CD4-positive, alpha-beta memory T cell (primary cell): ENCODE measurements at regions of chr7 and their contacts with region 1.

Region 1: GRCh38 chr7:135509903-135510602 is at the start of gene CNOT4:
- DNase-seq: peak; percentile 91 to 98 (median 95)
- H3K4me3 ChIP-seq: peak within 1 kb of the TSS; percentile 73 to 85
- H3K4me3 Mint-ChIP-seq: no peak within 1 kb of the TSS
- H3K27ac ChIP-seq: peak within 1 kb of the TSS; percentile 95
- H3K27ac Mint-ChIP-seq: no peak within 1 kb of the TSS
- H3K4me1 ChIP-seq: peaks cover 34% of the 10 kb centered on the region
- H3K4me1 Mint-ChIP-seq: peaks cover 2 to 12% (median 6%) of the 10 kb centered on the region in 4 donors
- H3K27me3 ChIP-seq: no peaks in the 10 kb centered on the region
- H3K27me3 Mint-ChIP-seq: no peaks in the 10 kb centered on the region
- total RNA-seq, gene CNOT4: 33.9 to 35.0 TPM

Region 2: DNA sequence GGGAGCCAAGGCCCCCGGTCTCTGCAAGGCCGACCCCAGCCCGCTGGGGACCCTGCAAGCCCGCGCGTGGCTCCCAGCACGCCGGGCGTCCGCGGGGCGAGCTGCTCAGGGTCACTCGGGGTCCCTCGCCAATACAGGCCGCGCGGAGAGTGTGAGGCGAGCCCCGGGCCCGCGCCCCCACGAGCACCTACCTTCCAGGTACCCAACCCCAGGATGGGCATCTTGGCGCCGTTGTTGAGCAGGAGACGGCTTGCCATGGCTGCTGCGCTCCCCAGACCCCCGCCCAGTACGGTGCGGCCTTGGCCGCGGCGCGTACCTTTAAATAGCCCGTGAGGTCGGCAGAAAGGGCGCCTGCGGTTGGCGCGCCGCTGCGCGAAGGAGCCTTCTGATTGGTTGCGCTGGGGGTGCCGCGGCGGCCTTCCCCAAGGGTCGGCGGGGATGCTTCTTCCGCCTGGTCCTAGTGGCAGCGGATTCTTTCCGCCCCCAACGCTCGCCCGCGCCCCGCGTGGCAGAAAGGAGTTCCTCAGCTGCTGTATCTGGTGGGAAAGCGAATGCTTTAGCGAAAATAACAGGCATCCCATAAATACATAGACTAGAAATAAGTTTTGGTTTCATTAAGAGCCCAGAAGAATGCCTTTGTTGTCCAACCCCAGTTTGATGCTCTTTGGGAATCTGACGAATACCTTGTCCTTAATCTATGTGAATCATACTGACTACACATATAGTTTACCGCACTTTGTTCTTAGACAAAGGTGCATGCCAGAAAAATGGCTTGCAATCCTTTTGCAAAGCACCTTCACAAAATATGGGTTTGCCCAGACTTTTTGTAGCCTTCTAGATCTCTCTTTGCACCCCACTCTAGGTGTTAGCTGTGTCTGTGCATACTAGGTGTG is 1051.0 kb before region 1 on chr7 and contains the start of gene AKR1B1:
- CTCF ChIA-PET with region 1: no interaction called
- POLR2A ChIA-PET with region 1: no interaction called
- intact Hi-C with region 1: loop called (anchors 5 kb)
- DNase-seq: peak; percentile 84 to 89 (median 86)
- H3K4me3 ChIP-seq: peak within 1 kb of the TSS; percentile 25 to 62
- H3K4me3 Mint-ChIP-seq: peak within 1 kb of the TSS; percentile 91 to 94 (median 92)
- H3K27ac ChIP-seq: peak within 1 kb of the TSS; percentile 55
- H3K27ac Mint-ChIP-seq: peak within 1 kb of the TSS; percentile 71 to 95 (median 88)
- H3K4me1 ChIP-seq: peaks cover 36% of the 10 kb centered on the region
- H3K4me1 Mint-ChIP-seq: peaks cover 38 to 57% (median 43%) of the 10 kb centered on the region in 4 donors
- H3K27me3 ChIP-seq: no peaks in the 10 kb centered on the region
- H3K27me3 Mint-ChIP-seq: no peaks in the 10 kb centered on the region
- total RNA-seq, gene AKR1B1: 81.2 to 91.1 TPM

Region 3: DNA sequence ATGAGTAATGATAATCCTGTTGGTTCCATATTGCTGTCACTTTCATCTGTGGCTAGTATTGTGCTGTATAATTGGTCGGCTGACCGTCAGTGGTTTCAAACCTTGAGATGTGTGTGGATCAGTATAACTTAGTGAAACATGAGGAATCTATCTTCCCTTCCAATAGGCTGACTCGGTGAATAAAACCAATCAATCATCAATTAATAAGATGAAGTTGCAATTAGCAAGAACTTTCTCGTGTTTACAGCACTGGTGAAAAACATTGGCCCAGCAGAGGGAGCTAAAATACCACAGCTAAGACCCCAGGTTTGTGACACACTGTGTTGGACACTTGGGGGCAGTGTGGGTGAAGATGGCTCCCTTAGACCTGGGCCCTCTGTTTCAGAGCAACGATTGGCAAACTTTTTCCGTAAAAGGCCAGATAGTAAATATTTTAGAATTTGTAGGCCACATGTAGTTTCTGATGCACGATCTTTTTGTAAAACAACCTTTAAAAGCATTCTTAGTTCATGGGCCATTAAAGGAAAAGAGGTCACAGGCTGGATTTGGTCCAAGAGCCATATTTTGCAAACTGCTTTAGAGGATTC is 228.6 kb before region 1 on chr7:
- CTCF ChIA-PET with region 1: interaction called, 4 read pairs
- POLR2A ChIA-PET with region 1: no interaction called
- intact Hi-C with region 1: loop called (anchors 2 kb)
- DNase-seq: peak; percentile 77 to 79 (median 78)
- H3K4me3 ChIP-seq: no peak overlapping the region
- H3K4me3 Mint-ChIP-seq: peak overlapping the region in 6 of 8 donors; percentile 16 to 72 (median 36)
- H3K27ac ChIP-seq: no peak overlapping the region
- H3K27ac Mint-ChIP-seq: peak overlapping the region in 4 of 7 donors; percentile 59 to 85 (median 72)
- H3K4me1 ChIP-seq: peaks cover 21% of the 10 kb centered on the region
- H3K4me1 Mint-ChIP-seq: peaks cover 15 to 24% (median 21%) of the 10 kb centered on the region in 4 donors
- H3K27me3 ChIP-seq: no peaks in the 10 kb centered on the region
- H3K27me3 Mint-ChIP-seq: peaks cover 5 to 8% of the 10 kb centered on the region in 2 donors

Region 4: DNA sequence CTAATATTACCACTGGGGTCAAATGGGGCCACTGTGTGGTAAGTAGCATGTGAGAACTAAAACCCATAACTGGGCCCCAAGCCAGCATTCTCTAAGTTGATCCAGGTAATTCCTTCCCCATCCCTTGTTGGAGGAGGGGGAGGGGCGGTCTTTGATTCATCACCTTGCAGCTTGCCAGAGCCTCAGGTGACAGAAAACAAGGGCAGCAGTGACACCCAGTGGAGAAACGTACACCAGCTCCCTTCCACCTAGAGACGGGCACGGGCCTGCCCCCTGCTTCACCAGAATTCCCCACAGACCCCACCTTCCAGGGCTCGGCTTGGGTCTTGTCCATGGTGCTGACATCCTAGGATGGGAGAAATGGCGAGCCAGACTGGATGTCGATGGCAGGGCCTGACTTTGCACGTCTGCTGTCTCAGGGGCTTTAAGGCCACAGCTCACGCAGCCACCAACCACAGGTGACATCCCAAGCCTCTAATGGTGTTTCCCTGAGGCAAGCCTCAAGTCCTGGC is 174.4 kb before region 1 on chr7:
- CTCF ChIA-PET with region 1: no interaction called
- POLR2A ChIA-PET with region 1: no interaction called
- intact Hi-C with region 1: no loop called
- DNase-seq: peak; percentile 9 to 42 (median 19)
- H3K4me3 ChIP-seq: no peak overlapping the region
- H3K4me3 Mint-ChIP-seq: no peak overlapping the region
- H3K27ac ChIP-seq: no peak overlapping the region
- H3K27ac Mint-ChIP-seq: no peak overlapping the region
- H3K4me1 ChIP-seq: no peaks in the 10 kb centered on the region
- H3K4me1 Mint-ChIP-seq: peaks cover 0 to 2% (median 0%) of the 10 kb centered on the region in 4 donors
- H3K27me3 ChIP-seq: no peaks in the 10 kb centered on the region
- H3K27me3 Mint-ChIP-seq: peaks cover 2% of the 10 kb centered on the region in 2 donors

Region 5: GRCh38 chr7:135536150-135536549 is 26.1 kb after region 1 on chr7:
- CTCF ChIA-PET with region 1: no interaction called
- POLR2A ChIA-PET with region 1: no interaction called
- intact Hi-C with region 1: no loop called
- DNase-seq: no peak
- H3K4me3 ChIP-seq: no peak overlapping the region
- H3K4me3 Mint-ChIP-seq: no peak overlapping the region
- H3K27ac ChIP-seq: no peak overlapping the region
- H3K27ac Mint-ChIP-seq: peak overlapping the region in 1 of 7 donors; percentile 11
- H3K4me1 ChIP-seq: no peaks in the 10 kb centered on the region
- H3K4me1 Mint-ChIP-seq: no peaks in the 10 kb centered on the region
- H3K27me3 ChIP-seq: no peaks in the 10 kb centered on the region
- H3K27me3 Mint-ChIP-seq: peaks cover 6 to 15% of the 10 kb centered on the region in 2 donors

Region 6: DNA sequence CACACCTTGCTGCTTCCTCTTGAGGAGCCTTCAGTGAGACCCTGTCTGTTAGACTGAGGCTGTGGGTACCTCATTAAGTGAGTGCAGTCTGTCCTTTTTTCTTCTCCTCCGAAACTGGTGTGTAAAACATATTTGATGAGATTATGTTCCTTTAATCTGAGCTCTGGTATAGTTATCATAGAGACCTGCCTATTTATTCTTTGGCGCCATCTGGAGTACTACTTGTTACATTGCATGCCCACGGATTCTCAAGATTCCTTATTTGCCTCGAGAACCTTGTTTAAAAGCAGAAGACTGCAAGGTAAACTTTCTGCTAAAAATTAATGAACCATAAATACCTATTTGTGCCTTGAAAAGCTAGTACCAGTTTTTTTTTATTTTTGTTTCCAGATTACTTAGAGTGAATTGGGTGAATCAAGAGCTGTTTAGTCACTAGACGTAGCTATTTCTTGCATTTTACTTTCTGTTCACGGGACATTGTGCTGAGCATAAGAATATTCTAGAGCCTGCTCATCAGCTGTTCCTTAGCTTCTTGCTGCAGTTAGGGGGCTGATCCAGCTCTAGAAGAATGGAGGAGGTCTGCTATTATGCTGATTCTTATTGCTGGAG is 135.3 kb after region 1 on chr7:
- CTCF ChIA-PET with region 1: interaction called, 7 read pairs
- POLR2A ChIA-PET with region 1: no interaction called
- intact Hi-C with region 1: loop called (anchors 1 kb)
- DNase-seq: peak; percentile 35 to 46 (median 43)
- H3K4me3 ChIP-seq: no peak overlapping the region
- H3K4me3 Mint-ChIP-seq: no peak overlapping the region
- H3K27ac ChIP-seq: no peak overlapping the region
- H3K27ac Mint-ChIP-seq: peak overlapping the region in 4 of 7 donors; percentile 18 to 68 (median 32)
- H3K4me1 ChIP-seq: no peaks in the 10 kb centered on the region
- H3K4me1 Mint-ChIP-seq: peaks cover 0 to 3% (median 2%) of the 10 kb centered on the region in 4 donors
- H3K27me3 ChIP-seq: no peaks in the 10 kb centered on the region
- H3K27me3 Mint-ChIP-seq: no peaks in the 10 kb centered on the region

Region 7: GRCh38 chr7:135977007-135977741 is 467.1 kb after region 1 on chr7 and contains the start of gene MTPN:
- CTCF ChIA-PET with region 1: no interaction called
- POLR2A ChIA-PET with region 1: no interaction called
- intact Hi-C with region 1: loop called (anchors 1 kb)
- DNase-seq: peak; percentile 95 to 98 (median 97)
- H3K4me3 ChIP-seq: peak within 1 kb of the TSS; percentile 82 to 90
- H3K4me3 Mint-ChIP-seq: peak within 1 kb of the TSS; percentile 89 to 100 (median 96)
- H3K27ac ChIP-seq: peak within 1 kb of the TSS; percentile 93
- H3K27ac Mint-ChIP-seq: peak within 1 kb of the TSS; percentile 89 to 98 (median 95)
- H3K4me1 ChIP-seq: peaks cover 88% of the 10 kb centered on the region
- H3K4me1 Mint-ChIP-seq: peaks cover 59 to 94% (median 76%) of the 10 kb centered on the region in 4 donors
- H3K27me3 ChIP-seq: no peaks in the 10 kb centered on the region
- H3K27me3 Mint-ChIP-seq: no peaks in the 10 kb centered on the region
- total RNA-seq, gene MTPN: 83.1 to 84.5 TPM